CD4-positive, alpha-beta memory T cell (primary cell): ENCODE measurements at regions of chr2 and their contacts with region 1.

Region 1: DNA sequence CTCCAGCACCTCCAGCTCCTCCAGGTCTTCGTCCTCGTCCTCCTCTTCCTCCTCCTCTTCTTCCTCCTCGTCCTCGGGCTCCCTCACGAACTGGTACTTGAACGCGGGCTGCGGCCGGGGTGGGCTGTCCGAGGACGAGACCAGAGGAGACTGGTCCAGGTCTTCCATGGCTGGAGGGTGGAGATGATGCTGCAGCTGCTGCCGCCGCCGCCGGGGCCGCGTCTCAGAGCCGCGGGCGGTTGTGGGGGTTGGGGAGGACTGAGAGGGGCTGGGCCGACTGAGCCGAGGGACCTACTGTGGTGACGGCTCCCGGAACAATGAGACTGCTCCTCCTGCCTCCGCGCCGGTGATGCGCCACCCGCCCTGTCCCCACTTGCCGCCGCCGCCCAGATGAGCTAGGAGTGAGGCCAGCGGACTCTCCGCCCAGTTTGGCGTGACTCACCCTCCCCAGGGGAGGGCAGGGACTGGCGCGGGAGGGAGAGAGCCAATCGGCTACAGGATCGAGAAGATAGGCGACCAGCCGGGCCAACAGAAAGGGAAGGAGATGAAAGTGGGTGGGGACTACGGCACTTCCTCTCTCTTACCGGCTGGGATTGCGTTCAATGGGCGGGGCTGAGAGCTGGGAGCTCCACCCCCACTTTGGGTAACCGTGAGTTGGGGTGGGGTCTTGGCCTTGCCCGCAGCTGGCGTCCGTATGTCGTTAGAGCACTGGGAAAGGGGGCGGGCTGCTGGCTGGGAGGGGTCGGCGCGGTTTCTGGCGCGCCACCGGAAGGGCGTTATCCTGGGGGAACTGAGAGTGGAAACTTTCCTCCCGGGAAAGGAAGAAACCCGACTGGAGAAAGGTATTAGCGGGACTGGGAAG is at the start of gene RTN4:
- DNase-seq: peak; percentile 98 to 99 (median 99)
- H3K4me3 ChIP-seq: peak within 1 kb of the TSS; percentile 88 to 93
- H3K4me3 Mint-ChIP-seq: peak within 1 kb of the TSS; percentile 94 to 100 (median 100)
- H3K27ac ChIP-seq: peak within 1 kb of the TSS; percentile 87
- H3K27ac Mint-ChIP-seq: peak within 1 kb of the TSS; percentile 93 to 100 (median 99)
- H3K4me1 ChIP-seq: peaks cover 70% of the 10 kb centered on the region
- H3K4me1 Mint-ChIP-seq: peaks cover 51 to 82% (median 60%) of the 10 kb centered on the region in 4 donors
- H3K27me3 ChIP-seq: no peaks in the 10 kb centered on the region
- H3K27me3 Mint-ChIP-seq: no peaks in the 10 kb centered on the region
- total RNA-seq, gene RTN4: 73.8 to 81.3 TPM

Region 2: DNA sequence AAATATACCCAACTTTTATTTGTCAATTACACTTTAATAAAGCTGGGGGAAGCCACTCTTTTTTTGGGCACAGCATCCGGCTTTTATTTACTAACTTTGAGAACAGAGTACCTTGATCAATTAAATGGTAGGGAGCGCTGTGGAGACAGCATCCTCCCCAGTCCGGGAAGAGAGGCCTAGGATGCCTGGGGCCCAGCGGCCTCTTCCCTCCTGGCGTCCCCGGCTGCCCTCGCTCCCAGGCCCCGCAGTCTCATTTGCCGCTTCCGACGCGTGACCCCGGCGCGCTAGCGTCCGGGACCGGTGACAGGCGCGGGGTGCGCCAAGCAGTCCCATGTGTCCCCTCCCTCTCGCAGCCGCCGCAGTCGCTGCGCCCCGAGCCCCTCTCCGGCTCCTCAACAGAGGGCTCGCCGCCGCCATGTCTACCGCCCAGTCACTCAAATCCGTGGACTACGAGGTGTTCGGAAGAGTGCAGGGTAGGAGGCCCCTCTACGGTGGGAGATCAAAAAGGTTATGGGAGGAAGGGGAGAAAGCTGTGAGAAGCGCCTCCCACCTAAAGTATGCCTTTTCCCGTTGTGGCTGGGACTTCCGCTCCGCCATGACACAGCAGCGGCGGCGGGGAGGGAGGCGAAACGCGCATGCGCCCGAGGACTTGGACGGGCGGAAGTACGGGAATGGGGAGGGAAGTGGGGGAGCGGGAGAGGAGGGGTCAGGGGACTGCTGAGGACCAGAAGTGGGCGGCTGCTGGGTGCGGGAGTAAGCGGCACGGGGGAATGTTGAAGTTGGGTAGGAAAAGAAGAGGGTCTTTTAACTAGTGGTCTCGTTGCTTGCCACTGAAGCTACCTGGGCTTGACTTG is 934.9 kb before region 1 on chr2 and contains the start of gene ACYP2:
- CTCF ChIA-PET with region 1: no interaction called
- POLR2A ChIA-PET with region 1: no interaction called
- intact Hi-C with region 1: loop called (anchors 10 kb)
- DNase-seq: peak; percentile 89 to 92 (median 89)
- H3K4me3 ChIP-seq: peak within 1 kb of the TSS; percentile 77 to 83
- H3K4me3 Mint-ChIP-seq: peak within 1 kb of the TSS; percentile 94 to 99 (median 97)
- H3K27ac ChIP-seq: peak within 1 kb of the TSS; percentile 93
- H3K27ac Mint-ChIP-seq: peak within 1 kb of the TSS; percentile 99 to 100 (median 99)
- H3K4me1 ChIP-seq: peaks cover 17% of the 10 kb centered on the region
- H3K4me1 Mint-ChIP-seq: peaks cover 12 to 27% (median 16%) of the 10 kb centered on the region in 4 donors
- H3K27me3 ChIP-seq: no peaks in the 10 kb centered on the region
- H3K27me3 Mint-ChIP-seq: no peaks in the 10 kb centered on the region
- total RNA-seq, gene ACYP2: 13.1 to 16.9 TPM

Region 3: DNA sequence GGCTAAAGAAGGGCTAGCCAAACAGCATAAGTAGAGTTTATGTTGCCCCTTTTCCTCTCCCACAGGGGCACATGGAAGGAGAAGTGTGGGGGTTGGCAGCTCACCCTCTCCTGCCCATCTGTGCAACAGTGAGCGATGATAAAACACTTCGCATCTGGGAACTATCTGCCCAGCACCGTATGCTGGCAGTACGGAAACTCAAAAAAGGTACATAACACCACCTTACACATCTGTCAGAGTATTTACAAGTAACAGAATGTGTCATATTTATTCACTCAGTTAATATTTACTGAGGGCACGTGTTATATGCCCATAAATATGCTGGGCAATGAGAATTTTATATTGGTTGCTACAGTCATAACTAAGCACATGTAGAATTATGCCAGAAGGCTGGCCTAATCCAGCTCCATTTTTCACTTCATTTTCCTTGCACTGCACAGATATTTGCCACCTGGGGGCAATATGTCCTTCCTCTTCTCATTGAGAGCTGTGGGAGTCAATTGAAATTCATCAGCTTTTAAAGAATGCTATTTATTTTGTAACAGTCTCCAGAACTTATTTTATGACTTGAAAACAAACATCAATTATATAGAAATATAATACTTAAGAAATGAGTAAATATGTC is 150.7 kb before region 1 on chr2:
- CTCF ChIA-PET with region 1: interaction called, 10 read pairs
- POLR2A ChIA-PET with region 1: interaction called, 5 read pairs
- intact Hi-C with region 1: loop called (anchors 5 kb)
- DNase-seq: peak in 4 of 5 donors; percentile 11 to 25 (median 16)
- H3K4me3 ChIP-seq: no peak overlapping the region
- H3K4me3 Mint-ChIP-seq: no peak overlapping the region
- H3K27ac ChIP-seq: no peak overlapping the region
- H3K27ac Mint-ChIP-seq: no peak overlapping the region
- H3K4me1 ChIP-seq: peaks cover 27% of the 10 kb centered on the region
- H3K4me1 Mint-ChIP-seq: peaks cover 20 to 26% (median 23%) of the 10 kb centered on the region in 4 donors
- H3K27me3 ChIP-seq: no peaks in the 10 kb centered on the region
- H3K27me3 Mint-ChIP-seq: no peaks in the 10 kb centered on the region

Region 4: GRCh38 chr2:55026202-55026601 is 24.2 kb before region 1 on chr2:
- CTCF ChIA-PET with region 1: interaction called, 10 read pairs
- POLR2A ChIA-PET with region 1: interaction called, 16 read pairs
- intact Hi-C with region 1: no loop called
- DNase-seq: no peak
- H3K4me3 ChIP-seq: no peak overlapping the region
- H3K4me3 Mint-ChIP-seq: peak overlapping the region in 1 of 8 donors; percentile 17
- H3K27ac ChIP-seq: no peak overlapping the region
- H3K27ac Mint-ChIP-seq: peak overlapping the region in 2 of 7 donors; percentile 2 to 30
- H3K4me1 ChIP-seq: peaks cover 78% of the 10 kb centered on the region
- H3K4me1 Mint-ChIP-seq: peaks cover 7 to 24% (median 18%) of the 10 kb centered on the region in 4 donors
- H3K27me3 ChIP-seq: no peaks in the 10 kb centered on the region
- H3K27me3 Mint-ChIP-seq: no peaks in the 10 kb centered on the region

Region 5: GRCh38 chr2:55078956-55079355 is 28.6 kb after region 1 on chr2:
- CTCF ChIA-PET with region 1: no interaction called
- POLR2A ChIA-PET with region 1: no interaction called
- intact Hi-C with region 1: no loop called
- DNase-seq: no peak
- H3K4me3 ChIP-seq: no peak overlapping the region
- H3K4me3 Mint-ChIP-seq: no peak overlapping the region
- H3K27ac ChIP-seq: no peak overlapping the region
- H3K27ac Mint-ChIP-seq: no peak overlapping the region
- H3K4me1 ChIP-seq: no peaks in the 10 kb centered on the region
- H3K4me1 Mint-ChIP-seq: peaks cover 0 to 6% (median under 1%) of the 10 kb centered on the region in 4 donors
- H3K27me3 ChIP-seq: no peaks in the 10 kb centered on the region
- H3K27me3 Mint-ChIP-seq: peaks cover 6% of the 10 kb centered on the region in 2 donors

Region 6: DNA sequence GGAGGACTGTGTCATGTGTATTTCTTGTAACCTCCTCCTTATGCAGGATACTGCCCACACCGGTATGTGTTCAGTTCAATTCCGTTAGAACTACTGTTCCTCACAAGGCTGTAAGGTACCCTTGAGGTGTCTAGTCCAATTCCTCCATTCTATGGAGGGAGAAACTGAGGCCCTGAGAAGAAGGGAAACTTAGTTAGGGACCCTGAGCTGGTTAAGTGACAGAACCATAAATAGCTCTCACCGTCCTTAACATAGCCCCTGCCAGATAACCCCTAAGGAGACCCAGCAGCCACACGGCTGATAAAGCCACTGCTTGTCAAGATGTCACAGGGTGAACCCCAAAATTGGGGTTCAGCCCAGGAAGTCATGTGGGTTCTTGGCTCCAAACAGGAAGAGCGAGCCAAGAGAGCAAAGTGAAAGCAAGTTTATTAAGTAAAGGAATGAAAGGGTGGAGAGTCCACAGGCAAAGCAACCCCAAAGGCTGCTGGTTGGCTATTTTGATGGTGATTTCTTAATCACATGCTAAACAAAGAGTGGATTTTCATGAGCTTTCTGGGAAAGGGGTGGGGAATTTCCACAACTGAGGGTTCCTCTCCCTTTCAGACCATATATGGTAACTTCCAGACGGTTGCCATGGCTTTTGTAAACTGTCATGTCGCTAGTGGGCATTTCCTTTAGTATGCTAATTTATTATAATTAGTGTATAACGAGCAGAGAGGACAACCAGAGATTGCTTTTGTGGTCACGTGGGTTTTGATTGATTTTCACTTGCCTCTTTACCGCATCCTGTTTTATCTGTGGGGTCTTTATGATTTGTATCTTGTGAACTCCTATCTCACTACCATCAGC is 83.3 kb after region 1 on chr2:
- CTCF ChIA-PET with region 1: interaction called, 13 read pairs
- POLR2A ChIA-PET with region 1: interaction called, 42 read pairs
- intact Hi-C with region 1: loop called (anchors 1 kb)
- DNase-seq: peak; percentile 68 to 89 (median 76)
- H3K4me3 ChIP-seq: peak overlapping the region; percentile 39 to 58
- H3K4me3 Mint-ChIP-seq: peak overlapping the region; percentile 86 to 93 (median 88)
- H3K27ac ChIP-seq: peak overlapping the region; percentile 85
- H3K27ac Mint-ChIP-seq: peak overlapping the region; percentile 94 to 99 (median 98)
- H3K4me1 ChIP-seq: peaks cover 29% of the 10 kb centered on the region
- H3K4me1 Mint-ChIP-seq: peaks cover 18 to 39% (median 26%) of the 10 kb centered on the region in 4 donors
- H3K27me3 ChIP-seq: no peaks in the 10 kb centered on the region
- H3K27me3 Mint-ChIP-seq: no peaks in the 10 kb centered on the region

Region 7: DNA sequence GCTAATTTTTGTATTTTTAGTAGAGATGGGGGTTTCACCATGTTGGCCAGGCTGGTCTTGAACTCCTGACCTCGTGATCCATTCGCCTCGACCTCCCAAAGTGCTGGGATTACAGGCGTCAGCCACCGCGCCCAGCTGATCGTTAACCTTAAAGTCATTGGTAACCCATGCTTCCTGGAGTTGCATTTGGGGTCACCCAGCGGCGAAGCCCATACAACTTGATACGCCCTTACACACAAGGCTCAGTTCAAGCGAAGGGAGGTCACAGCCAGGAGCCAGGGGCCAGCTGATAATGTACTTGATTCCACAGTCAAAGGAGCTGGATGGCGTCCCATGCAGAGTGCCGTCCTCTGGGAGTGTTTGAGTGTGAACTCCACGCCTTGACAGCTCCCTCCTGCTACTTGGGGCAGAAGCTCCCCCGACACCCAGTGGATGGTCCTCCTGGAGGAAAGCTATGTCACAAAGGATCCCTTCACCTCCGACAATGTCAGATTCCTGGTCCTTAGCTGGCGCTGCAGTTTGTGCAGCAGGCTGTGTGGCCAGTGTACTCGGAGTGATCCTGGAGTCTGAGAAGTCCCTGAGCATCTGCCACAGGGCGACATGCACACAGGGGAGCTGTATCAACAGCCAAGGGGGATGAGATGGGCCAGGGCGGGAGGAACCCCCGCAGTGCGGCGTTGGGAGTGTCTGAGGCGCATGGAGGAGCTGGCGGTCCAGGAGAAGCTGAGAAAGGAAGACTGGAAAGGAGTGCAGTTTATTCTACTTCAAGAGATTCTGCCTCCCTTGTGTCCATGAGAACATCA is 173.8 kb after region 1 on chr2:
- CTCF ChIA-PET with region 1: interaction called, 9 read pairs
- POLR2A ChIA-PET with region 1: interaction called, 13 read pairs
- intact Hi-C with region 1: loop called (anchors 2 kb)
- DNase-seq: peak in 2 of 5 donors; percentile 21 to 39
- H3K4me3 ChIP-seq: no peak overlapping the region
- H3K4me3 Mint-ChIP-seq: peak overlapping the region; percentile 79 to 90 (median 86)
- H3K27ac ChIP-seq: peak overlapping the region; percentile 84
- H3K27ac Mint-ChIP-seq: peak overlapping the region; percentile 85 to 95 (median 93)
- H3K4me1 ChIP-seq: peaks cover 40% of the 10 kb centered on the region
- H3K4me1 Mint-ChIP-seq: peaks cover 32 to 55% (median 41%) of the 10 kb centered on the region in 4 donors
- H3K27me3 ChIP-seq: no peaks in the 10 kb centered on the region
- H3K27me3 Mint-ChIP-seq: no peaks in the 10 kb centered on the region

Region 8: GRCh38 chr2:55419679-55420438 is 369.5 kb after region 1 on chr2 and contains the start of gene CCDC88A:
- CTCF ChIA-PET with region 1: no interaction called
- POLR2A ChIA-PET with region 1: interaction called, 4 read pairs
- intact Hi-C with region 1: loop called (anchors 2 kb)
- DNase-seq: peak; percentile 86 to 88 (median 86)
- H3K4me3 ChIP-seq: peak within 1 kb of the TSS; percentile 85 to 94
- H3K4me3 Mint-ChIP-seq: peak within 1 kb of the TSS; percentile 77 to 96 (median 94)
- H3K27ac ChIP-seq: peak within 1 kb of the TSS; percentile 57
- H3K27ac Mint-ChIP-seq: peak within 1 kb of the TSS; percentile 83 to 95 (median 91)
- H3K4me1 ChIP-seq: peaks cover 21% of the 10 kb centered on the region
- H3K4me1 Mint-ChIP-seq: peaks cover 20 to 41% (median 30%) of the 10 kb centered on the region in 4 donors
- H3K27me3 ChIP-seq: no peaks in the 10 kb centered on the region
- H3K27me3 Mint-ChIP-seq: peaks cover 1 to 2% of the 10 kb centered on the region in 2 donors
- total RNA-seq, gene CCDC88A: 18.7 to 19.1 TPM